A673 (cell line): ENCODE measurements at regions of chr12 and their contacts with region 1.

Region 1: DNA sequence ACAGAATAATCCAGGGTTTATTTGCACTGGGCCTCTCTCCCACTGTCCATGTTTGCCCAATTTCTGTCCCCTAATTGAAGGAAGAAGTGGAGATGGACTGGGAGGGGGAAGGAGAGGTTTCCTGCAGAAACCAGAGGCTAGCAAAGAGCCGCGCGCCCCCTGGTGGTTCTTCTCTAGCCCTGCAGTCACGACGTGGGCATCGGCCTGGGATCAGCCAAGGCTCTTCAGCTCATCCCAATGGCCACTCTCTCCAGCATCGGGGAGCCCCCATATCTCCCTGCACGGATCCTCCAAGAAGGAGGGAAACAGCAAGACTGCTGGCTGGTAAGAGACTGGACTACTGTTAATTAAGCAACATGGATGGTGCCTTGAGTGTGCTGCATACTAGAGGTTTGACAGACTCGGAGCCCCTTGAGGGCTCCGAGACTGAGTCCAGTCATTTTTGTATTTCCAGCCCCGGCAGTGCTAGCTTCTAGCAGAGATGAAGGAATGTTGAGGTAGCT is 18.7 kb downstream of the ZBTB39 start:
- DNase-seq: peak; percentile 80
- H3K4me3 ChIP-seq: no peak overlapping the region
- H3K27ac ChIP-seq: no peak overlapping the region
- H3K4me1 ChIP-seq: peaks cover 6% of the 10 kb centered on the region
- H3K27me3 ChIP-seq: no peaks in the 10 kb centered on the region
- CTCF ChIP-seq: peak; percentile 94

Region 2: GRCh38 chr12:56839915-56840325 is 147.7 kb before region 1 on chr12:
- CTCF ChIA-PET with region 1: interaction called, 6 read pairs
- POLR2A ChIA-PET with region 1: no interaction called
- intact Hi-C with region 1: loop called (anchors 1 kb)
- DNase-seq: peak; percentile 65
- H3K4me3 ChIP-seq: no peak overlapping the region
- H3K27ac ChIP-seq: no peak overlapping the region
- H3K4me1 ChIP-seq: peaks cover 4% of the 10 kb centered on the region
- H3K27me3 ChIP-seq: no peaks in the 10 kb centered on the region
- CTCF ChIP-seq: peak; percentile 67

Region 3: DNA sequence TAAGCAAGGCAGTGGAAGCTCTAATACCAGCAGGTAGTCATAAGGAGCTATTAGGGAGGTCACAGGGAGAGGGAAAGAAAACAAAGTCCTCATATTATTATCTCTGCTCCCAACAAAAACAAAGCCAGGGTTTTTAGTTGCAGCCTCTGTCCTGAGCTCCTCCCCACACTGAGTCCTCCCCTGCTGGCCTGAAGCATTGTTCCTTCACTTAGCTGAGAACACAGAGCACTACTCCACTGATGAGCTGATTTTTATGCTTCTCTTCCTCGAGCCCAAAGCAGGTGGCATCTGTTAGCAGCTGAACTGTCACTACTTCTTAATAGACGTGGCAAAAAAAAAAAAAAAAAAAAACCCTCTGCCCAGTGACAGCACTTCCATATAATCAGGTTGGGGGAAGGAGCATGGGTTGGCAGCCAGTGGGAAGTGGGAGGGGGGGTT is 273.8 kb after region 1 on chr12:
- CTCF ChIA-PET with region 1: no interaction called
- POLR2A ChIA-PET with region 1: no interaction called
- intact Hi-C with region 1: no loop called
- DNase-seq: no peak
- H3K4me3 ChIP-seq: no peak overlapping the region
- H3K27ac ChIP-seq: no peak overlapping the region
- H3K4me1 ChIP-seq: no peaks in the 10 kb centered on the region
- H3K27me3 ChIP-seq: no peaks in the 10 kb centered on the region
- CTCF ChIP-seq: no peak